ENCODE measurements at regions of chr1 and their contacts with region 1.

Region 1: GRCh38 chr1:109643385-109644230 is 12.3 kb upstream of the GSTM4 start:
- DNase-seq: peak; percentile 74 to 99
- H3K4me3 ChIP-seq: no peak overlapping the region
- H3K27ac ChIP-seq: no peak overlapping the region
- H3K4me1 ChIP-seq: no peaks in the 10 kb centered on the region; a peak in 1 of 7 replicates
- H3K27me3 ChIP-seq: no peaks in the 10 kb centered on the region; a peak in 2 of 7 replicates
- CTCF ChIP-seq: peak; percentile 83 to 98 (median 92)
- EP300 ChIP-seq: 0 out of 3 replicates have a peak, but pooled peaks of 1 of the 2 experiments have one; percentile 12
- POLR2A ChIP-seq: no peak
- RAD21 ChIP-seq: peak; percentile 89 to 92

Region 2: DNA sequence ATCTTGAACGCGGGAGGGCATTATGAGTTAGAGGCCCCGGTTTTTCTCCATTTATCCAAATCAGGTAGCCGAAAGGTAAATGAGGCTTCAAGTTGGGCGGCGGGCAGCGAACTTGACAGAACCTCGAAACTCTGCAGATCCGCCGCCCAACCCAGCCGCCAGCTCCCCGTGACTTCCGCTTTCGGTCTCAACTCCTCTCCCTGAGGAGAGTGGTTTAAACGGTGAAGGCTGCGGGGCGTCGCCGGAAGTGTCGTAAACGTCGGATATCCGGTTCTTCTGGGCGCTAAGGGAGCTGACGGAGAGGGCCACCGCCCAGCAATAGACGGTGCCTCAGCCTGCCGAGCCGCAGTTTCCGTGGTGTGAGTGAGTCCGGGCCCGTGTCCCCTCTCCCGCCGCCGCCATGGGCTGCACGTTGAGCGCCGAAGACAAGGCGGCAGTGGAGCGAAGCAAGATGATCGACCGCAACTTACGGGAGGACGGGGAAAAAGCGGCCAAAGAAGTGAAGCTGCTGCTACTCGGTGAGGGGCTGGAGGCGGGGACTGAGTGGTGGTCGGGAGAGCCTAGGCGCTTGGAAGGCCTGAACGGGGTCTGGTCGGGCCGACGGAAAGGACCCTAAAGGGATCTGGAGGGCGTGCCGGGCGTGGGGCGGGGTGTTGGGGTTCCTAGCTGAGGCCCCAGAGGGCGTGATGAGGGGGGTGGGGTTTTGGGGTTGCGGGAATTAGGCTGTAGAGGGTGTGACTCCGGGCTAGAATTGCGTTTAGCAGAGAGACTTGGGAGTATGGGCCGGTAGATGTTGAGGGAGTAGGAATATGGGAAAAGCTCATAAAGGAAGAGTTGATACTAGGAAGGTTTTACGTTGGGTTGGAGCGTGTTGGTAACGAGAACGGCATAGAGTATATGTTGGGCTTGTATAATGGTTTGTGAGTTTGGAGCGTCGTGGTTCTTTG is 95.0 kb before region 1 on chr1 and contains the start of gene GNAI3:
- CTCF ChIA-PET with region 1: interaction called, 69 read pairs
- POLR2A ChIA-PET with region 1: interaction called, 18 read pairs
- DNase-seq: peak; percentile 82 to 95
- H3K4me3 ChIP-seq: peak within 1 kb of the TSS; percentile 81 to 91 (median 90)
- H3K27ac ChIP-seq: peak within 1 kb of the TSS; percentile 83
- H3K4me1 ChIP-seq: peaks cover 0 to 8% (median under 1%) of the 10 kb centered on the region in 4 experiments; a peak in 5 of 7 replicates
- H3K27me3 ChIP-seq: no peaks in the 10 kb centered on the region
- CTCF ChIP-seq: peak in 1 of 3 experiments; percentile 1; a peak in 1 of 4 replicates
- EP300 ChIP-seq: no peak
- POLR2A ChIP-seq: peak; percentile 62 to 91
- RAD21 ChIP-seq: peak in 1 of 2 experiments; percentile 4; a peak in 1 of 4 replicates
- total RNA-seq, gene GNAI3: 9.2 and 9.8 TPM in 2 replicates

Region 3: DNA sequence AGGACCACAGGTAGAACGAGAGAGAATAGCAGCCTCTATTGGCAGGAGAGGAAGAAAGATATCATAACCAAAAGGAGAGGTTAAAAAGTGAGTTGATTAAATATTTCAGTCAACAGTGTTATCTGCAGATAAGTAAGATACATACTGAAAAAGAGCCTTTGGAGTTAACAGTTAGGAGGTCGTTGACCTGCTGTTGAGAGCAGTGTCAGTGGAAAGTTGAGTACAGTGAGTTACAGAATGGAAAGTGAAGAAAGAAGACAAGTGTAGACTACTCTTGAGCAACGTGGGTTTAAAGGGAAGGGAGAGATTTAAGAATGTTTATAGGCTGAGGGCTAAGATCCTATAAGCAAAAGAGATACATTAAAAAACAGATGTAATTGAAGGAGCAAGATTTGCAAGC is 54.4 kb before region 1 on chr1:
- CTCF ChIA-PET with region 1: no interaction called
- POLR2A ChIA-PET with region 1: no interaction called
- DNase-seq: no peak
- H3K4me3 ChIP-seq: no peak overlapping the region
- H3K27ac ChIP-seq: no peak overlapping the region
- H3K4me1 ChIP-seq: no peaks in the 10 kb centered on the region
- H3K27me3 ChIP-seq: no peaks in the 10 kb centered on the region
- CTCF ChIP-seq: no peak
- EP300 ChIP-seq: no peak
- POLR2A ChIP-seq: no peak
- RAD21 ChIP-seq: no peak

Region 4: GRCh38 chr1:109620841-109621286 is 22.7 kb before region 1 on chr1:
- CTCF ChIA-PET with region 1: interaction called, 35 read pairs
- POLR2A ChIA-PET with region 1: interaction called, 10 read pairs
- DNase-seq: peak in 1 of 2 experiments; percentile 89
- H3K4me3 ChIP-seq: peak overlapping the region; percentile 69 to 85 (median 78)
- H3K27ac ChIP-seq: no peak overlapping the region
- H3K4me1 ChIP-seq: peaks cover 4 to 25% (median 12%) of the 10 kb centered on the region in 4 experiments
- H3K27me3 ChIP-seq: no peaks in the 10 kb centered on the region
- CTCF ChIP-seq: no peak
- EP300 ChIP-seq: no peak
- POLR2A ChIP-seq: no peak
- RAD21 ChIP-seq: no peak

Region 5: GRCh38 chr1:109687616-109688499 is 44.2 kb after region 1 on chr1 and contains the start of gene GSTM1:
- CTCF ChIA-PET with region 1: interaction called, 60 read pairs
- POLR2A ChIA-PET with region 1: interaction called, 3 read pairs
- DNase-seq: peak; percentile 49 to 89
- H3K4me3 ChIP-seq: peak within 1 kb of the TSS; percentile 45 to 62 (median 50)
- H3K27ac ChIP-seq: no peak within 1 kb of the TSS
- H3K4me1 ChIP-seq: peaks cover 0 to 5% (median 3%) of the 10 kb centered on the region in 4 experiments; a peak in 3 of 7 replicates
- H3K27me3 ChIP-seq: no peaks in the 10 kb centered on the region
- CTCF ChIP-seq: peak in 2 of 3 experiments; percentile 29 to 56; a peak in 3 of 4 replicates
- EP300 ChIP-seq: no peak
- POLR2A ChIP-seq: peak in 1 of 2 experiments; percentile 64; a peak in 1 of 3 replicates
- RAD21 ChIP-seq: peak; percentile 34 to 60; a peak in 3 of 4 replicates
- total RNA-seq, gene GSTM1: 16.5 and 16.7 TPM in 2 replicates

Region 6: GRCh38 chr1:109762821-109763645 is 119.4 kb after region 1 on chr1:
- CTCF ChIA-PET with region 1: interaction called, 293 read pairs
- POLR2A ChIA-PET with region 1: no interaction called
- DNase-seq: no peak
- H3K4me3 ChIP-seq: no peak overlapping the region
- H3K27ac ChIP-seq: no peak overlapping the region
- H3K4me1 ChIP-seq: no peaks in the 10 kb centered on the region; a peak in 1 of 7 replicates
- H3K27me3 ChIP-seq: no peaks in the 10 kb centered on the region
- CTCF ChIP-seq: no peak
- EP300 ChIP-seq: no peak
- POLR2A ChIP-seq: no peak
- RAD21 ChIP-seq: no peak

Region 7: DNA sequence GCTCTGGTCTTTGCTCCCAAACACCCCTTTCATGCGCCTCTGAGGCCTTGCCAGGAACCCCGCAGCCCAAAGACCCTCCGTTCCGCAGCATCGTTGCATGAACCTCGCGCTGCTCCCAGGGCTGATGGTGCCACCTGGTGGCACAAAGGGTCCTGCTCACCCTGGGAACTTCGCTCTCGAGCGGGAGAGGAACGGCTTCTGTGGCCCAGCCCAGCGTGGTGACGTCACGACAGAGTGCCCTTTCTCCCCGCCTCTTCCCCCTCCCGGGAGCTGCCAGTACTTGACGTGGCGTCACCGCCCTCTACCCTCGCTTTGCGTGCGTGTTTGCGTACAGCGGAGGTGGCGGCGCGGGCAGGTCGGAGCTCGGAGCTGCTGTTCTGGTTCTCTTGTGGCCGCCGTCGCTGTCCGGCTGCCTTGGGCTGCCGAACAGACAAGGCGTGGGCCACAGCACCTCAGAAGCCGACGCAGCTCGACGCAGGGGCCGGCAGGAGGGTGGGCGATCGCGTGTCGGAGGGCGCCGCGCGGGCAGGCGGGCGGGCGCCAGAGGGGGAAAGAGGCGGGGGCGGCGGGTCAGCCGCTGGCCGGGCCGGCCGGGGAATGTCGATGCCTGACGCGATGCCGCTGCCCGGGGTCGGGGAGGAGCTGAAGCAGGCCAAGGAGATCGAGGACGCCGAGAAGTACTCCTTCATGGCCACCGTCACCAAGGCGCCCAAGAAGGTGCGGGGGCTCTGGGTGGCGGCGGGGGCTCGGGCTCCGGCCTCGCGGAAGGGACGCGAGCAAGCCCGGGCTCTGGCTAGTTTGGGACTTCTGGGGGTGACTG is 341.1 kb after region 1 on chr1 and contains the start of gene AHCYL1:
- CTCF ChIA-PET with region 1: interaction called, 25 read pairs
- POLR2A ChIA-PET with region 1: interaction called, 4 read pairs
- DNase-seq: peak; percentile 97
- H3K4me3 ChIP-seq: peak within 1 kb of the TSS; percentile 40 to 82 (median 78)
- H3K27ac ChIP-seq: peak within 1 kb of the TSS; percentile 86
- H3K4me1 ChIP-seq: peaks cover 4 to 12% (median 9%) of the 10 kb centered on the region in 4 experiments; a peak in 6 of 7 replicates
- H3K27me3 ChIP-seq: no peaks in the 10 kb centered on the region
- CTCF ChIP-seq: peak; percentile 94 to 98 (median 96)
- EP300 ChIP-seq: no peak
- POLR2A ChIP-seq: peak; percentile 82 to 86
- RAD21 ChIP-seq: peak; percentile 99
- total RNA-seq, gene AHCYL1: 92.5 and 95.9 TPM in 2 replicates

Measured in H1 (cell line).